Panc1 (cell line): ENCODE measurements at regions of chr11 and their contacts with region 1.

Region 1: DNA sequence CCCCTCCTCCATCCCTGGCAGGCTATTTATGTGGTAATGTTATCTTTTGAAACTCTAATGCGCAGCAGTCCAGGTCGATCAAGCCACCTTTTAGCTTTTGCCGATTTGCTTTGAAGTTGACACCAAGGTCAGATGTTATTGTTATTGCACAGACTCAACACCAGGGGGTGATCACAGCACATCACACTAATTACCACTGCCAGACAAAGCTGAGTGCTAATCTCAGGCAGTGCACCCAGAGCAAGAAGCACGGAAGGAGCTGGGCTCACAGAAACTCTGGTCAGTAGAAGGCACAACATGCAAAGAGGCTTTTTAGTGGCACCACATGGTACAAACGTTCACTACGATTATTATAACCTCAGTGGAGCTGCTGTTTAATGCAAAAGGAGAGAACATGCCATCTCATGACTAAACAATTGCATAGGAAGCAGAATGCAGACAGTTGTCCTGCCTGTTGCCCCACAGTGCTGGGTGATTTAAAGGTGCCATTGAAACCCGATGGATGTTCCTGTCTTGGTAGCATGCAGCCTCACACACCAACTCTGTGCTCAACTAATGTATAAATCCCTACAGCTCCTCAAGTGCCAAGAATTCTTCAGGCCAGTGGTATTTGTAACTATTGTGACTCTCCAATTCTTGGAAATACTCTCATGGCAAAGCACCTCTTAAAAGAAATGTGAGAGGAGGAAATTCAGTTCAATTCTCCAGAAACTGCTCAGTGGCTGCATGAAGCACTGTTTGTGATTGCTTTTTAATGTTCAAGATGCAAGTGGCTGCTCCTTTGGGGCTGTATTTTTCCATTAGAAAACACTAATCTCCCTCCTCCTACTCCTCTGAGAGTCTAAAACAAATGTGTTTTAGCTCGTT is 353.9 kb upstream of the DDI1 start:
- DNase-seq: peak; percentile 41
- ATAC-seq: peak; percentile 84
- H3K4me3 ChIP-seq: no peak overlapping the region
- H3K27ac ChIP-seq: no peak overlapping the region
- H3K4me1 ChIP-seq: no peaks in the 10 kb centered on the region
- H3K27me3 ChIP-seq: no peaks in the 10 kb centered on the region
- CTCF ChIP-seq: peak; percentile 85

Region 2: DNA sequence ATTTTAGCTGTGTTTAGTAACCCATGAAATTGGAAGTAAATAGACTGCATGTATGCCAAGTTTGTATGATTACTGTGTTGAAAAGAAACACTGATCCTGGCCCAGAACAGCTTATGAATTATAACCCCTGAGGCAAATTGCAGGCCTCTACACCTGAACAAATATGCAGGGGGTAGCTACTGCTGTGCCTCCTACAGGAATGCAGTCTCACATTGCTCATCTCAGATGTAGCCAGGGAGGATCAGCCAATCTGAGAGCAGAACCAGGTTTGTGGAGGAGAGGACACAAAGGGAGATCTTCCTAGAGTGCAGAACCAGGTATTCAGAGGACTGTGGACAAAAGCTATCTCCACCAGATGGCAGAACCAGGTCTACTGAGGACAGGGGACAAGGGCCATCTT is 88.3 kb before region 1 on chr11:
- CTCF ChIA-PET with region 1: no interaction called
- POLR2A ChIA-PET with region 1: no interaction called
- in situ Hi-C with region 1: no loop called
- intact Hi-C with region 1: no loop called
- DNase-seq: no peak
- ATAC-seq: no peak
- H3K4me3 ChIP-seq: no peak overlapping the region
- H3K27ac ChIP-seq: no peak overlapping the region
- H3K4me1 ChIP-seq: no peaks in the 10 kb centered on the region
- H3K27me3 ChIP-seq: no peaks in the 10 kb centered on the region; the same call in none of the 2 replicates
- CTCF ChIP-seq: no peak

Region 3: GRCh38 chr11:103862094-103862801 is 179.7 kb after region 1 on chr11:
- CTCF ChIA-PET with region 1: no interaction called
- POLR2A ChIA-PET with region 1: no interaction called
- in situ Hi-C with region 1: no loop called
- intact Hi-C with region 1: no loop called
- DNase-seq: no peak
- ATAC-seq: no peak
- H3K4me3 ChIP-seq: no peak overlapping the region
- H3K27ac ChIP-seq: no peak overlapping the region
- H3K4me1 ChIP-seq: no peaks in the 10 kb centered on the region
- H3K27me3 ChIP-seq: no peaks in the 10 kb centered on the region
- CTCF ChIP-seq: no peak

Region 4: GRCh38 chr11:104151404-104152204 is 469.1 kb after region 1 on chr11:
- CTCF ChIA-PET with region 1: no interaction called
- POLR2A ChIA-PET with region 1: no interaction called
- in situ Hi-C with region 1: no loop called
- intact Hi-C with region 1: loop called (anchors 2 kb)
- DNase-seq: no peak
- ATAC-seq: no peak
- H3K4me3 ChIP-seq: no peak overlapping the region
- H3K27ac ChIP-seq: no peak overlapping the region
- H3K4me1 ChIP-seq: no peaks in the 10 kb centered on the region
- H3K27me3 ChIP-seq: no peaks in the 10 kb centered on the region
- CTCF ChIP-seq: peak; percentile 47; the same call in 1 of the 2 replicates

Region 5: GRCh38 chr11:104803776-104804175 is 1121.2 kb after region 1 on chr11:
- CTCF ChIA-PET with region 1: no interaction called
- POLR2A ChIA-PET with region 1: no interaction called
- in situ Hi-C with region 1: no loop called
- intact Hi-C with region 1: no loop called
- DNase-seq: no peak
- ATAC-seq: no peak
- H3K4me3 ChIP-seq: no peak overlapping the region
- H3K27ac ChIP-seq: no peak overlapping the region
- H3K4me1 ChIP-seq: no peaks in the 10 kb centered on the region
- H3K27me3 ChIP-seq: no peaks in the 10 kb centered on the region
- CTCF ChIP-seq: no peak